Endothelial cell of umbilical vein (primary cell): ENCODE measurements at regions of chr4 and their contacts with region 1.

Region 1: DNA sequence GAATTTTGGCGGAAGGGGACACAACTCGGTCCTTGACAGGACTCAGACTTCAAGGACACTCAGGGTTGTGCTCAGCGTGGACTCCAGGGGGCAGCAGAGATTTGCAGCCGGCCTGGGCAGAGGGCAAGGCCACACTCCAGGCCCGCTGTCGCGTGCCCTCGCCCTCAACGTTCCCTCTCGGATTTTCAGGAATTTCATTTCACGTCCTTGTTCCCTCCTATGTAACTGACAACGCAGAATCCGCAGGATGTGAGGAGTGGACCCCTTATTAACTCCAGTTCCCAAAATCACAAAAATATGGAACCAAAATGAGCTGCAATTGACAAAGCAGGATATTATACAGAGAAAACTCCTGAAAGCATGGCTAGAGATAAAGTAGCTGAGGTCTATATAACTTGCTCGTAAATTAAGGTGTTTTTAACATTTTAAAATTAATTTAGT is 21.0 kb upstream of the DCTD start:
- DNase-seq: peak; percentile 68
- H3K4me3 ChIP-seq: no peak overlapping the region
- H3K27ac ChIP-seq: no peak overlapping the region
- H3K4me1 ChIP-seq: no peaks in the 10 kb centered on the region
- H3K27me3 ChIP-seq: peaks cover 5 to 12% of the 10 kb centered on the region in 2 experiments
- CTCF ChIP-seq: peak; percentile 91 to 93
- POLR2A ChIP-seq: no peak

Region 2: GRCh38 chr4:182764137-182764536 is 174.1 kb before region 1 on chr4:
- CTCF ChIA-PET with region 1: no interaction called
- POLR2A ChIA-PET with region 1: no interaction called
- dilution Hi-C with region 1: no loop called
- intact Hi-C with region 1: no loop called
- DNase-seq: peak; percentile 41
- H3K4me3 ChIP-seq: no peak overlapping the region
- H3K27ac ChIP-seq: no peak overlapping the region
- H3K4me1 ChIP-seq: peaks cover 5% of the 10 kb centered on the region
- H3K27me3 ChIP-seq: no peaks in the 10 kb centered on the region
- CTCF ChIP-seq: no peak
- POLR2A ChIP-seq: no peak

Region 3: DNA sequence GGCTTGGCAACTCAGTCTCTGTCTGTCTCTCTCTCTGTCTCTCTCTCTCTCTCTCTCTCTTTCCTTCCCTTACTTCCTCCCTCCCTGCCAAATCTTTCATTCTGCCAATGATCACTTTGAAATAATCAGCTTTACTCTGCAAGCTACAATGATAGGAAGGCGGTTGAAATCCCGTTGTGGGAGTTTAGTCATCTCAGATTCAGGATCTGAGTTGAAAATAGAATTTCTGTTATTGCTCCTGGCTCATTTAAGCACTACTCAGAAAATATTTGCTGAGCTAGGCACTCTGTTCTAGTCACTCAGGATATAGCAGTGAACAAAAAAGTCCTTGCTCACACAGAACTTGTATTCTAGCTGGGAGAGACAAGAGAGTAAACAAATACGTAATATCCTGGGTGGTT is 35.3 kb after region 1 on chr4:
- CTCF ChIA-PET with region 1: interaction called, 11 read pairs
- POLR2A ChIA-PET with region 1: no interaction called
- dilution Hi-C with region 1: no loop called
- intact Hi-C with region 1: no loop called
- DNase-seq: peak; percentile 49
- H3K4me3 ChIP-seq: no peak overlapping the region
- H3K27ac ChIP-seq: no peak overlapping the region
- H3K4me1 ChIP-seq: peaks cover 23% of the 10 kb centered on the region
- H3K27me3 ChIP-seq: no peaks in the 10 kb centered on the region
- CTCF ChIP-seq: no peak
- POLR2A ChIP-seq: no peak

Region 4: DNA sequence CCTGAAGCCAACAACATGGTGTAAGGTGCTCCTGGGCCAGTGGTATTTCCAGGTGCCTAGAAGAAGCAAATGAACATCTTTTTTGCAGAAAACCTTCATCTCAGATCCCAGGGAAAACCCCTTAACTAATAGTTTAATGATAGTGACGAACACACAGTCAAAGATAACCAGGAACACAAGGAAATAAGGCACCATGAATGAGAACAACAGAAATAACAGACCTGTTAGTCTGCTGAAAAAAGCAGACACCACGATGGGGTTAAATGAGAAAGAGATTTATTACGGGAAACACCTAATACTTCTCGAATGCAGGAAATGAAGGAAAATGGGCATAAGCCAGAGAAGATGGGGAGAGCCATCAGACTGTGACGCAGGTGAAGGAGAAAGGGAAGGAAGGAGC is 130.3 kb after region 1 on chr4:
- CTCF ChIA-PET with region 1: interaction called, 76 read pairs
- POLR2A ChIA-PET with region 1: no interaction called
- dilution Hi-C with region 1: no loop called
- intact Hi-C with region 1: loop called (anchors 1 kb)
- DNase-seq: no peak
- H3K4me3 ChIP-seq: no peak overlapping the region
- H3K27ac ChIP-seq: no peak overlapping the region
- H3K4me1 ChIP-seq: no peaks in the 10 kb centered on the region
- H3K27me3 ChIP-seq: peaks cover 5 to 10% of the 10 kb centered on the region in 2 experiments
- CTCF ChIP-seq: no peak
- POLR2A ChIP-seq: no peak

Region 5: DNA sequence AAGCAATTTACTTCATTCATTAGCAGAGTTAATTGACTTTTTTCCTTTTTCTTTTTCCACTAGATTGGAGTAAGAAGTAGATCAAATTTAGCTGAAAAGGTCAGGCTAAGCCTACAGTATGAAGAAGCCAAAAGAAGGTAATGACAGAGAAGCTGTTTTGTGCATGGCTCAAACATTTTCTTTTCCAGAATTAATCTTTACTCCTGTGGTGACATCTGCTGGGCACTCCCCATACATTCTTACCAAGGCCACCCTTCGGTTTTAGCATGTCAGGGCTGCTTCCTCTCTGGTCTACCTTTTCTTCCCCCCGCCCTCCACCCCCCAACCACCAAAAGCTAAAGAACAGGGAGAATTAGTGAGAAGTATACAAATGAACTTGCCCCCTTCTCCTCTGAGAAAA is 311.6 kb after region 1 on chr4:
- CTCF ChIA-PET with region 1: interaction called, 155 read pairs
- POLR2A ChIA-PET with region 1: no interaction called
- dilution Hi-C with region 1: no loop called
- intact Hi-C with region 1: no loop called
- DNase-seq: peak; percentile 52
- H3K4me3 ChIP-seq: no peak overlapping the region
- H3K27ac ChIP-seq: no peak overlapping the region
- H3K4me1 ChIP-seq: no peaks in the 10 kb centered on the region
- H3K27me3 ChIP-seq: no peaks in the 10 kb centered on the region
- CTCF ChIP-seq: peak; percentile 11 to 33
- POLR2A ChIP-seq: no peak

Region 6: GRCh38 chr4:183268556-183268955 is 330.3 kb after region 1 on chr4:
- CTCF ChIA-PET with region 1: interaction called, 174 read pairs
- POLR2A ChIA-PET with region 1: no interaction called
- dilution Hi-C with region 1: no loop called
- intact Hi-C with region 1: no loop called
- DNase-seq: no peak
- H3K4me3 ChIP-seq: no peak overlapping the region
- H3K27ac ChIP-seq: no peak overlapping the region
- H3K4me1 ChIP-seq: no peaks in the 10 kb centered on the region
- H3K27me3 ChIP-seq: no peaks in the 10 kb centered on the region
- CTCF ChIP-seq: no peak
- POLR2A ChIP-seq: no peak